ENCODE measurements at regions of chr2 and their contacts with region 1.

Region 1: GRCh38 chr2:162123806-162124758 is 28.0 kb downstream of the GCG start:
- DNase-seq: no peak
- ATAC-seq: peak in 2 of 8 donors; percentile 46 to 56
- H3K4me3 ChIP-seq: no peak overlapping the region
- H3K27ac ChIP-seq: no peak overlapping the region
- H3K4me1 ChIP-seq: peaks cover 0 to 5% (median 0%) of the 10 kb centered on the region in 9 donors
- H3K27me3 ChIP-seq: no peaks in the 10 kb centered on the region
- CTCF ChIP-seq: peak; percentile 73 to 90 (median 85)

Region 2: DNA sequence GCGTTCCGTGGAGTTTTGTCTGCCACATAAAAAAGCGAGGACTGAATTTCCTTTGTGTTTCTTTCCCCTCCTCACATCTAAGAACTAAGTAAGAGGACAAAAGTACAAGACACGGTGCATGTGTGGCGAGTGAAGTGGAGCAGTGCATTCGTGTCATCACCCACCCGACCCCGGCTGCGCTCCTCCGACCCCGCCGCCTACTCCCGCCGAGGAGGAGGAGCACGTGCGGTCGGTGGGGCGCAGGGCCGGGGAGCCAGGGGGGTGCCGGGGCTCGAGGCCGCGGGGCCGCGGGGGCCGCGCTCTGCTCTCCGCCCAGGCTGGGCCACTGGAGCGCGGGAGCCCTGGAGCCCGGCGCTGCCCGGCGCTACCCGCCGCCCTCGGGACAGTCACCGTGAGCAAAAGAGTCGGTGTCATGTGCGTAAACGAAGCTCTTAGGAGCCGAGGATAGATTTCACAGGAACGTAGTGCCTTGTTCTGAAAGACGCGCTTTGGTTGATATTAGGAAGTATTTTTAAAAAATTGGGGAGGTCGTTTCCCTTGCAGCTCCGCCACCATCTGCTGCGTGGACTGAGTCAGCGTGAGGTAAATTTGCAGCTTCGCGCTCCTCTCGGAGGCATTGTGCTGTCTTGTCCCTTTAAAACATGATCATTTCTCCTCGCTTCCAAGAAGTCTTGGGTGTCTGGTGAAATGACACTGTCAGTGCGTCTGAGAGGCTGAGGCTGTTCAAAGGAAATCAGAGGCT is 697.0 kb before region 1 on chr2:
- intact Hi-C with region 1: loop called in 1 of 10 experiments (anchors 10 kb)
- DNase-seq: no peak
- ATAC-seq: peak in 2 of 8 donors; percentile 14 to 20
- H3K4me3 ChIP-seq: peak overlapping the region in 5 of 10 donors; percentile 10 to 25 (median 14)
- H3K27ac ChIP-seq: no peak overlapping the region
- H3K4me1 ChIP-seq: peaks cover 0 to 28% (median 15%) of the 10 kb centered on the region in 9 donors
- H3K27me3 ChIP-seq: peaks cover 26 to 100% (median 100%) of the 10 kb centered on the region in 7 donors
- CTCF ChIP-seq: peak in 1 of 9 donors; percentile 1

Region 3: DNA sequence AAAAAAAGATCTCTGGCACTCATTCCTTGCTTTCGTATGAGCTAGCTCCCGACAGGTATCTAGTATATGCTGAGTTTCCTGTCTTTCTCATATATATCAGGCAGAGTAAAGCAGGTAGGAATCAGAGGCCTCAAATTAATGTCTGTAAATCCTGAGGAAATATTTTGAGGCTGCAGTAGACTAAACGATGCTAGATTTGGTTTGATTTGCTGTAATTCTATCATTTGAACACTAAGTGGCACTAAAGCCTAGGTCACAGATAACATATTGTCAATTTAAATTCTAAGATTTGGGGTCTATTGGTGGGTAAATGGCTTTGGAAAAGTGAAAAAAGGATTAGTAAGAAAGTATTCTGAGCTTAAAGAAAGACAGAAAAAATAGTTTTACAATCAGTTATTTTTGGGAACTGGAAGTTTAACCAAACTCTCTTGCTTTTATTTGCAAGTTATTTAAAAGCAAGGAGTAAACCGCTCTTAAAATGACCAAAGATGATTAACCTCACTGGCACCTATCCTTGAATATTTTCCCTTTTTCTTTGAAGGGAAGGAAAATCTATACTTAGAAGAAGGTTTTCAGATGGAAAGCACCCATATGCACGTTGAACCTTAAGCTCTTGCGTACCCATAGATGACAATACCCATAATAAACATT is 537.4 kb before region 1 on chr2:
- intact Hi-C with region 1: loop called in 7 of 10 experiments (anchors 10 kb)
- DNase-seq: no peak
- ATAC-seq: no peak
- H3K4me3 ChIP-seq: no peak overlapping the region
- H3K27ac ChIP-seq: no peak overlapping the region
- H3K4me1 ChIP-seq: no peaks in the 10 kb centered on the region
- H3K27me3 ChIP-seq: peaks cover 0 to 6% (median 0%) of the 10 kb centered on the region in 7 donors
- CTCF ChIP-seq: peak; percentile 16 to 73 (median 54)

Region 4: DNA sequence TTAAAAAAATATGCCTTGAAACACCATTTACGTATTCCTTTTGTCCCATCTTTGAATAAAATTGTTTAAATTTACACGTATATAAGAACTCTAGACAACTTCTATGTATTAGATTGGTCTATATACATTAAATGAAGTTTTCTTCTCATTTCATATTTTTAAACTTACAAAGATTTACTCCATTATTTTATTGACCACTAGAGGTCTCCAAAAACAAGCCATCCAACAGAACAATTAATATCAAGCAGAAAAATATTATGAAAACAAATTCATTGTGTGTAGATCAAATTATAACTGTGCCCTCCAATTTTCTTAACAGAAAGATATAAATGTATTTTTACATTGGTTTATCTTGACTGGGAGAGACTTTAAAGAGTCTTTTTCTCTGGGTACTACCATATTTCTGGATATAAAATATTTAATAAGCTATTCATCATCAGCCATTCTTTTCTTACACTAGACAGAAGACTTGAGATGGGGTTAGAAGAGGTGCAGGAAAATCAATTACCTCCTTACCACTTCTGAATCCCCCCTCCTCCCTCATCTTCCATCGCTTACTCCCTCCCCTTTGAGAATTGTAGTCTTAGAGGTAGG is 116.5 kb before region 1 on chr2:
- intact Hi-C with region 1: loop called (anchors 1 to 5 kb)
- DNase-seq: no peak
- ATAC-seq: no peak
- H3K4me3 ChIP-seq: no peak overlapping the region
- H3K27ac ChIP-seq: no peak overlapping the region
- H3K4me1 ChIP-seq: peaks cover 0 to 5% (median 0%) of the 10 kb centered on the region in 9 donors
- H3K27me3 ChIP-seq: no peaks in the 10 kb centered on the region
- CTCF ChIP-seq: peak; percentile 57 to 86 (median 76)

Region 5: DNA sequence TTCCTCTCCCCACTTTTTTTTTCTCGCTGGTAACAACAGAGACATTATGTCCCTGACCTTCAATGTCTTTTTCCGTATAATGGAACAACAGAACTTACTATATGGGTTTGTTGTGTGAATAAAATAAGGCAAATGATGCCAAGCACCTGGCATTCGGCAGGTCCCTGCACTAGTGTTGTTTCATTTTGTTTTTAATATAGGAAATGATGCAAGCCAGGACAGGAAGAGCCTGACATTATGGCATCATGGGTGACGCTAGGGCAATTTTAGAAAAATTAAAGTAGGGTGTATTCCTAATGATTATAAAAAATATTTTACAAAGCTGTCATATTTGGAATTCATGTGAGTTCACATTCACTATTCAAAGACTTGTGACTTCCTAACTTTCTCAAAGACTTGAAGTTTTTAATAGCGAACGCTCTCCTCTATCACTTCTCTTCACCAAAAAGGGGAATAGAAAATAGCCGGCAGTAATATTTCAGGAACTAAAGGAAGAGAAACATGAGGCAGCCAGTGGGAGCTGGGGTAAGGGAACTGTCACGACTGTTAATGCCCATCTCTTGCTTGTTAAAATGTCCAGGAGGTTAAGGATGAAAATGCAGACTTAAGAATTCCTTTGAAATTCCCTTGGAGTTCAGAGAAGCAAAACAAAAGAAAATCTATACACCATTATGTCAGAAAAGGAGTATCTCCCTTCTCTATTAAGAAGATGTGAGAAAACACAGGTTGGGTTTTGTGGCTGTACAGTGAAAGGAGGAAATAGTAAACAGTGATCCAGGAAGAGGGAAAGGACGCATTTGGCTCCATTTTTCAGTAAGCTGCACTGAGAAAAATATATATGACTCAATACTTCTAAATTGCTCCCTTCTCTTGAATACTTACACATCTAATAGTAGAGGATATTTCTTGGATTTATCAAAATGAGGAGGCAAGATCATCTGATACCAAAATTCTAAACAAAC is 110.3 kb before region 1 on chr2:
- intact Hi-C with region 1: loop called in 6 of 10 experiments (anchors 1 to 5 kb)
- DNase-seq: no peak
- ATAC-seq: peak in 4 of 8 donors; percentile 42 to 65 (median 57)
- H3K4me3 ChIP-seq: peak overlapping the region in 4 of 10 donors; percentile 2 to 33 (median 20)
- H3K27ac ChIP-seq: peak overlapping the region in 5 of 10 donors; percentile 10 to 80 (median 34)
- H3K4me1 ChIP-seq: peaks cover 0 to 31% (median 0%) of the 10 kb centered on the region in 9 donors
- H3K27me3 ChIP-seq: no peaks in the 10 kb centered on the region
- CTCF ChIP-seq: no peak

Region 6: GRCh38 chr2:162073888-162074645 is 50.0 kb before region 1 on chr2 and contains the start of gene DPP4:
- intact Hi-C with region 1: loop called in 5 of 10 experiments (anchors 2 to 5 kb)
- DNase-seq: peak; percentile 14 to 38
- ATAC-seq: peak; percentile 33 to 82 (median 64)
- H3K4me3 ChIP-seq: peak within 1 kb of the TSS; percentile 52 to 84 (median 63)
- H3K27ac ChIP-seq: peak within 1 kb of the TSS in 9 of 10 donors; percentile 10 to 79 (median 65)
- H3K4me1 ChIP-seq: peaks cover 3 to 62% (median 27%) of the 10 kb centered on the region in 9 donors
- H3K27me3 ChIP-seq: peaks cover 0 to 18% (median 0%) of the 10 kb centered on the region in 7 donors
- CTCF ChIP-seq: peak in 1 of 9 donors; percentile 18
- total RNA-seq, gene DPP4: 1.7 to 8.3 (median 4.1) TPM